Naive thymus-derived CD8-positive, alpha-beta T cell (primary cell): ENCODE measurements at regions of chr14 and their contacts with region 1.

Region 1: DNA sequence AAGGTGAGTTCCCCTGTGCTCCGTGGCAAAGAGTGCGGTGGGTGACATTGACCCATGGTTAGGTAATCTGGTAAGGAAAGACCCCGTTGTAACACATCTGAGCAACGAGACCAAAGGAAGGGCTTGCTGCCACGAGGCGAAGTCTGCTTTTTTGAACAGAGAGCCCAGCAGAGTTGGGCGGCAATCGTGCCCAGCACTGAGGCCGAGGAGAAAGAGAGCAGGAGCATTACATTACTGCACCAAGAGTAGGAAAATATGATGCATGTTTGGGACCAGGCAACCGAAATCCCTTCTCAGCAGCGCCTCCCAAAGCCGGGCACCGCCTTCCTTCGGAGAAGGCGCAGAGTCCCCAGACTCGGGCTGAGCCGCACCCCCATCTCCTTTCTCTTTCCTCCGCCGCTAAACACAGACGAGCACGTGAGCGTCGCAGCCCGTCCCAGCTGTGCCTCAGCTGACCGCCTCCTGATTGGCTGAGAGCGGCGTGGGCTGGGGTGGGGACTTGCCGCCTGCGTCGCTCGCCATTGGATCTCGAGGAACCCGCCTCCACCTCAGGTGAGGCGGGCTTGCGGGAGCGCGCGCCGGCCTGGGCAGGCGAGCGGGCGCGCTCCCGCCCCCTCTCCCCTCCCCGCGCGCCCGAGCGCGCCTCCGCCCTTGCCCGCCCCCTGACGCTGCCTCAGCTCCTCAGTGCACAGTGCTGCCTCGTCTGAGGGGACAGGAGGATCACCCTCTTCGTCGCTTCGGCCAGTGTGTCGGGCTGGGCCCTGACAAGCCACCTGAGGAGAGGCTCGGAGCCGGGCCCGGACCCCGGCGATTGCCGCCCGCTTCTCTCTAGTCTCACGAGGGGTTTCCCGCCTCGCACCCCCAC is at the start of gene HIF1A:
- DNase-seq: peak; percentile 85 to 98 (median 96)
- ATAC-seq: peak; percentile 93 to 95
- H3K4me3 Mint-ChIP-seq: peak within 1 kb of the TSS; percentile 92 to 99 (median 96)
- H3K27ac Mint-ChIP-seq: peak within 1 kb of the TSS; percentile 95 to 99 (median 99)
- H3K4me1 Mint-ChIP-seq: peaks cover 25 to 63% (median 54%) of the 10 kb centered on the region in 4 donors
- H3K27me3 Mint-ChIP-seq: no peaks in the 10 kb centered on the region
- polyA plus RNA-seq, gene HIF1A: 51.7 to 63.5 (median 54.4) TPM

Region 2: GRCh38 chr14:61475316-61475715 is 219.7 kb before region 1 on chr14:
- POLR2A ChIA-PET with region 1: interaction called, 13 read pairs
- DNase-seq: peak in 2 of 10 donors; percentile 37 to 45
- ATAC-seq: no peak
- H3K4me3 Mint-ChIP-seq: peak overlapping the region in 9 of 10 donors; percentile 25 to 81 (median 61)
- H3K27ac Mint-ChIP-seq: peak overlapping the region in 9 of 10 donors; percentile 93 to 100 (median 99)
- H3K4me1 Mint-ChIP-seq: peaks cover 53 to 96% (median 93%) of the 10 kb centered on the region in 4 donors
- H3K27me3 Mint-ChIP-seq: no peaks in the 10 kb centered on the region

Region 3: GRCh38 chr14:61568572-61569131 is 126.4 kb before region 1 on chr14:
- POLR2A ChIA-PET with region 1: interaction called, 14 read pairs
- DNase-seq: peak; percentile 54 to 79 (median 66)
- ATAC-seq: peak; percentile 80 to 81
- H3K4me3 Mint-ChIP-seq: peak overlapping the region; percentile 67 to 86 (median 81)
- H3K27ac Mint-ChIP-seq: peak overlapping the region; percentile 77 to 94 (median 90)
- H3K4me1 Mint-ChIP-seq: peaks cover 31 to 66% (median 52%) of the 10 kb centered on the region in 4 donors
- H3K27me3 Mint-ChIP-seq: no peaks in the 10 kb centered on the region

Region 4: GRCh38 chr14:61662437-61663311 is 32.4 kb before region 1 on chr14:
- POLR2A ChIA-PET with region 1: interaction called, 10 read pairs
- DNase-seq: peak in 9 of 10 donors; percentile 9 to 70 (median 41)
- ATAC-seq: peak; percentile 80 to 84
- H3K4me3 Mint-ChIP-seq: peak overlapping the region; percentile 54 to 87 (median 77)
- H3K27ac Mint-ChIP-seq: peak overlapping the region; percentile 79 to 97 (median 92)
- H3K4me1 Mint-ChIP-seq: peaks cover 21 to 62% (median 55%) of the 10 kb centered on the region in 4 donors
- H3K27me3 Mint-ChIP-seq: no peaks in the 10 kb centered on the region

Region 5: GRCh38 chr14:61671082-61671481 is 24.0 kb before region 1 on chr14:
- POLR2A ChIA-PET with region 1: interaction called, 35 read pairs
- DNase-seq: peak; percentile 8 to 85 (median 40)
- ATAC-seq: peak; percentile 93 to 97
- H3K4me3 Mint-ChIP-seq: no peak overlapping the region
- H3K27ac Mint-ChIP-seq: no peak overlapping the region
- H3K4me1 Mint-ChIP-seq: peaks cover 0 to 18% (median 15%) of the 10 kb centered on the region in 4 donors
- H3K27me3 Mint-ChIP-seq: no peaks in the 10 kb centered on the region

Region 6: GRCh38 chr14:61719344-61720293 is 24.6 kb after region 1 on chr14:
- POLR2A ChIA-PET with region 1: interaction called, 12 read pairs
- DNase-seq: peak in 3 of 10 donors; percentile 38 to 48 (median 48)
- ATAC-seq: peak; percentile 85 to 88
- H3K4me3 Mint-ChIP-seq: peak overlapping the region; percentile 34 to 81 (median 64)
- H3K27ac Mint-ChIP-seq: peak overlapping the region; percentile 79 to 90 (median 86)
- H3K4me1 Mint-ChIP-seq: peaks cover 28 to 74% (median 70%) of the 10 kb centered on the region in 4 donors
- H3K27me3 Mint-ChIP-seq: no peaks in the 10 kb centered on the region

Region 7: DNA sequence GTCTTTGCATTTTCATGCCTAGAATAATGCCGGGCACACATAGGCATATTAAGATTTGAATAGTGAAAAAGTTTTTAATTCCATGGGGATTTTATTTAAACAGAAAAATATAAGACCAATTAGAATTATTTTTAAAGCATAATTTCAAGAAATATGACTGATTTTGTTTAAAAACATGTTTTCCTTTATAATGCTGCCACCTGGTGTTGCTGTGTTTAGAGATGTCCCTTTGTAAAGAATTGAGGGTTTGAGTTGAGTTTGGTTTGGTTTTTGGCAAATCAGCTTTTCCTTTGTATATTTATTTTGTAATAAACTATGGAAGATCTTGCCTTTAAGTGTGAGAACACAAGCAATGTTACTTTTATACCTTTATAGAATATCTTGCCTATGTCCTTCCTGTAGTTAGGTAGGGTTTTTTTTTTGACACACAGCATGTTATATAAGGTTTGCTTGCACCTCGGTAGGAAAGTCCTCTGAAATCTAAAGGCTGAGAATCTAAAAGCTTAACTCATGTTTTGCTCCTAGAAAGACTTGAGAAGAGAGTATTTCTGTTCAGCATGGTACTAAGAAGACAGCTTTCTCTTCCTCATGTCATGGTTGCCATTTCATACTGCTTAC is 35.8 kb after region 1 on chr14:
- POLR2A ChIA-PET with region 1: no interaction called
- DNase-seq: peak in 3 of 10 donors; percentile 41 to 51 (median 49)
- ATAC-seq: no peak
- H3K4me3 Mint-ChIP-seq: no peak overlapping the region
- H3K27ac Mint-ChIP-seq: peak overlapping the region; percentile 1 to 86 (median 46)
- H3K4me1 Mint-ChIP-seq: peaks cover 9 to 39% (median 22%) of the 10 kb centered on the region in 4 donors
- H3K27me3 Mint-ChIP-seq: no peaks in the 10 kb centered on the region

Region 8: GRCh38 chr14:61802010-61802568 is 107.0 kb after region 1 on chr14:
- POLR2A ChIA-PET with region 1: no interaction called
- DNase-seq: no peak
- ATAC-seq: no peak
- H3K4me3 Mint-ChIP-seq: no peak overlapping the region
- H3K27ac Mint-ChIP-seq: no peak overlapping the region
- H3K4me1 Mint-ChIP-seq: peaks cover 0 to 2% (median 0%) of the 10 kb centered on the region in 4 donors
- H3K27me3 Mint-ChIP-seq: no peaks in the 10 kb centered on the region